Left cardiac atrium (tissue), 4 donors: ENCODE measurements at regions of chr19 and their contacts with region 1.

Region 1: GRCh38 chr19:21358768-21359451 is at the start of gene ZNF738:
- DNase-seq: peak; percentile 94
- ATAC-seq: peak; percentile 100
- total RNA-seq, gene ZNF738: 3.1 to 3.5 TPM

Region 2: GRCh38 chr19:21328885-21329605 is 29.9 kb before region 1 on chr19 and contains the start of gene ZNF708:
- intact Hi-C with region 1: loop called in 1 of 2 experiments (anchors 1 kb)
- DNase-seq: peak; percentile 92
- ATAC-seq: peak; percentile 100
- total RNA-seq, gene ZNF708: 5.7 to 9.4 TPM